CD4-positive, alpha-beta memory T cell (primary cell): ENCODE measurements at regions of chr19 and their contacts with region 1.

Region 1: GRCh38 chr19:1269065-1269477 is at the start of gene CIRBP:
- DNase-seq: peak; percentile 99 to 100 (median 99)
- H3K4me3 ChIP-seq: peak within 1 kb of the TSS; percentile 90 to 100
- H3K4me3 Mint-ChIP-seq: peak within 1 kb of the TSS; percentile 89 to 93 (median 91)
- H3K27ac ChIP-seq: peak within 1 kb of the TSS; percentile 77
- H3K27ac Mint-ChIP-seq: peak within 1 kb of the TSS; percentile 91 to 98 (median 96)
- H3K4me1 ChIP-seq: peaks cover 71% of the 10 kb centered on the region
- H3K4me1 Mint-ChIP-seq: peaks cover 35 to 77% (median 58%) of the 10 kb centered on the region in 4 donors
- H3K27me3 ChIP-seq: no peaks in the 10 kb centered on the region
- H3K27me3 Mint-ChIP-seq: no peaks in the 10 kb centered on the region
- total RNA-seq, gene CIRBP: 574 to 638 TPM

Region 2: DNA sequence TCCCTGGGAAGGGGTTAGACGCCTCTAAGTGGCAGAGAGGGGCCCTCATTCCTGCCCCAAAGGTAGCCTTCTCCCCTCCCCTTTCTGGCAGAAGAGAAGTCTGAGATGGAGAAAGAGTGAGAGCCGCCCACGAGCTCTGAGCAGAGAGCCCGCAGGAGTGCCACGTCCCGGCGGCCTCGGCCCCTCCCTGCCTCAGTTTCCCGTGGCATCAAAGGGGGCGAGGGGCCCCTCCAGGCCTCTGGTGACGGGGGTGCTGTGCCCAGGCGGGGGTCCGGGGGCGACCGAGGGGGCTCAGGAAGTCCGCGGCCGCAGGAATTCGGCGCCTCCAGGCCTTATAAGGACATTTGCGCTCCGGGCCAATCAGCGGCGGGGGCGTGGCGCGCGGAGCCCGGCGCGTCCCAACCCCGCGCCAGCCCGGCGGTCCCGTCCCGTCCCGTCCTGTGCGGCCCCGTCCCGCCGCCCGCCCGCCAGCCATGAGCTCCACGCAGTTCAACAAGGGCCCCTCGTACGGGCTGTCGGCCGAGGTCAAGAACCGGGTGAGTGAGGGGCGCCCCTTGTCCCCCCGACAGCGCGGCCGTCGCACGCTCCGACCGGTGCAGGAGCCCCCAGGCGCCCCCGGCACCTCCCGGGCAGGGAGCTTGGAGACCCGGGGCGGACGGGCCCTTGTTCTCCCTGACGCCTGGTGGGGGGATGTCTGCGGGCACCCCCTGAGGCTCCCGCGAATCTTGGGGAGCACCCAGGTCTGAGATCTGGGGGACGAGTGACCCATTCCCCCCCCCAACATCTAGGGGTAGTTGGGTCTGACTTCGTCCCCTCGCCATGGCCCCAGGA is 242.7 kb before region 1 on chr19 and contains the start of gene CNN2:
- CTCF ChIA-PET with region 1: interaction called, 3 read pairs
- POLR2A ChIA-PET with region 1: interaction called, 32 read pairs
- intact Hi-C with region 1: no loop called
- DNase-seq: peak in 4 of 5 donors; percentile 46 to 68 (median 60)
- H3K4me3 ChIP-seq: peak within 1 kb of the TSS; percentile 91 to 97
- H3K4me3 Mint-ChIP-seq: peak within 1 kb of the TSS; percentile 97 to 99 (median 98)
- H3K27ac ChIP-seq: peak within 1 kb of the TSS; percentile 83
- H3K27ac Mint-ChIP-seq: peak within 1 kb of the TSS; percentile 93 to 98 (median 95)
- H3K4me1 ChIP-seq: peaks cover 38% of the 10 kb centered on the region
- H3K4me1 Mint-ChIP-seq: peaks cover 11 to 38% (median 23%) of the 10 kb centered on the region in 4 donors
- H3K27me3 ChIP-seq: no peaks in the 10 kb centered on the region
- H3K27me3 Mint-ChIP-seq: peaks cover 0 to 2% of the 10 kb centered on the region in 2 donors
- total RNA-seq, gene CNN2: 263 to 266 TPM

Region 3: DNA sequence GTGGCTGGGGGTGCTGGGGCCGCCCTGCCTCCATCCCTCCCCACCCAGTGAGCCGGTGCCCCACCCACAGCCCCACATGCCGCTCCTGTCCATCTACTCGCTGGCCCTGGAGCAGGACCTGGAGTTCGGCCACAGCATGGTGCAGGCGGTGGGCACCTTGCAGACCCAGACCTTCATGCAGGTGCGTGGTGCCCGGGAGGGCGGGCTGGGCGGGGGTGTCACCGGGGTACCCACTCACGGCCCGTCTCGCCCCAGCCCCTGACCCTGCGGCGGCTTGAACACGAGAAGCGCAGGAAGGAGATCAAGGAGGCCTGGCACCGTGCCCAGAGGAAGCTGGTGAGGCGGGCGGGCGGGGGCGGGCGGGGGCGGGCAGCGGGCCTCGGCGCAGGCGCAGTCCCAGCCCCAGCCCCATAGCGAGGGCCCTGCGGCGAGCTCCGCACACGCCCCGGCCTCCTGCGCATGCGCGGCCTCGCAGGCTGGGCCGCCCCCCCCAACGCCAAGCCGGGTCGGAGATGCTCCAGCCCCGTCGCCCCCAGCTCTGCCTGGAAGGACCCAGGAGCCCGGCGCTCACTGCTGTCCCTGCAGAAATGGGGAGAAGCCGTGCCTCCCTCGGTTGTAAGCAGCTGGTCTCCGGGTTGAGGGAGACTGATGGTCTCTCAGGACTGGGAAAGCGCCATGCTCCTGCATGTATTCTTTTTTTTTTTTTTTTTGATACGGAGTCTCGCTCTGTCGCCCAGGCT is 194.4 kb before region 1 on chr19:
- CTCF ChIA-PET with region 1: interaction called, 3 read pairs
- POLR2A ChIA-PET with region 1: interaction called, 25 read pairs
- intact Hi-C with region 1: no loop called
- DNase-seq: peak; percentile 91 to 94 (median 93)
- H3K4me3 ChIP-seq: peak overlapping the region in 1 of 2 donors; percentile 47
- H3K4me3 Mint-ChIP-seq: peak overlapping the region in 7 of 8 donors; percentile 66 to 93 (median 82)
- H3K27ac ChIP-seq: peak overlapping the region; percentile 84
- H3K27ac Mint-ChIP-seq: peak overlapping the region; percentile 94 to 99 (median 97)
- H3K4me1 ChIP-seq: peaks cover 85% of the 10 kb centered on the region
- H3K4me1 Mint-ChIP-seq: peaks cover 27 to 68% (median 43%) of the 10 kb centered on the region in 4 donors
- H3K27me3 ChIP-seq: no peaks in the 10 kb centered on the region
- H3K27me3 Mint-ChIP-seq: no peaks in the 10 kb centered on the region

Region 4: DNA sequence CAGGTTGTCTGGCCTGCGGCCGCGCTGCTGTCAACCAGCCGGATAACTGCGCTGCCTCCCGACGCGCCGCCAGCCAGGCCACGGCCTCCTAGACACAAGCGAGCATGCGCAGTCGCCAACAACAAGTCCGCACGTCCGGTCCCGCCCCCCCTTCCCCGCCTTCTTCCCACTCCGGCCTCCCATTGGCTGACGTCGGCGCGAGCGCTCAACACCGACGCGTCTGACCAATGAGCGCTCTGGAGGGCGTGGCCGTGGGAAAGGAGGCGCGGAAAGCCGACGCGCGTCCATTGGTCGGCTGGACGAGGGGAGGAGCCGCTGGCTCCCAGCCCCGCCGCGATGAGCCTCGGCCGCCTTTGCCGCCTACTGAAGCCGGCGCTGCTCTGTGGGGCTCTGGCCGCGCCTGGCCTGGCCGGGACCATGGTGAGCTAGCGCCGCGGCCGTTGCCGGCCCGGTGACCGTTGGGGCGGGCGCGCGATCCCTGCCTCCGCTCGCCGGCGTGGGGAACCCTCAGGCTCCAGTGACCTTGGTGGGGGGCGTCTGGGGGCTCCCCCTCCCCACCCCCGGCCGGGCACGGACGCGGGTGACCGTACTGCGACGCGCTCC is 165.3 kb before region 1 on chr19 and contains the start of gene GPX4:
- CTCF ChIA-PET with region 1: no interaction called
- POLR2A ChIA-PET with region 1: interaction called, 12 read pairs
- intact Hi-C with region 1: no loop called
- DNase-seq: peak; percentile 94 to 98 (median 97)
- H3K4me3 ChIP-seq: peak within 1 kb of the TSS; percentile 47 to 76
- H3K4me3 Mint-ChIP-seq: peak within 1 kb of the TSS; percentile 73 to 86 (median 77)
- H3K27ac ChIP-seq: peak within 1 kb of the TSS; percentile 96
- H3K27ac Mint-ChIP-seq: peak within 1 kb of the TSS; percentile 92 to 97 (median 96)
- H3K4me1 ChIP-seq: peaks cover 43% of the 10 kb centered on the region
- H3K4me1 Mint-ChIP-seq: peaks cover 14 to 51% (median 33%) of the 10 kb centered on the region in 4 donors
- H3K27me3 ChIP-seq: no peaks in the 10 kb centered on the region
- H3K27me3 Mint-ChIP-seq: no peaks in the 10 kb centered on the region
- total RNA-seq, gene GPX4: 210 to 220 TPM

Region 5: GRCh38 chr19:1241417-1242095 is 27.5 kb before region 1 on chr19 and contains the start of gene ATP5F1D:
- CTCF ChIA-PET with region 1: interaction called, 364 read pairs
- POLR2A ChIA-PET with region 1: interaction called, 650 read pairs
- intact Hi-C with region 1: loop called (anchors 1 kb)
- DNase-seq: peak; percentile 84 to 88 (median 86)
- H3K4me3 ChIP-seq: peak within 1 kb of the TSS; percentile 29 to 59
- H3K4me3 Mint-ChIP-seq: peak within 1 kb of the TSS; percentile 89 to 95 (median 92)
- H3K27ac ChIP-seq: peak within 1 kb of the TSS; percentile 72
- H3K27ac Mint-ChIP-seq: peak within 1 kb of the TSS; percentile 94 to 99 (median 98)
- H3K4me1 ChIP-seq: peaks cover 59% of the 10 kb centered on the region
- H3K4me1 Mint-ChIP-seq: peaks cover 12 to 52% (median 33%) of the 10 kb centered on the region in 4 donors
- H3K27me3 ChIP-seq: no peaks in the 10 kb centered on the region
- H3K27me3 Mint-ChIP-seq: peaks cover 6 to 10% of the 10 kb centered on the region in 2 donors
- total RNA-seq, gene ATP5F1D: 105 to 108 TPM

Region 6: GRCh38 chr19:1406774-1407499 is 137.9 kb after region 1 on chr19:
- CTCF ChIA-PET with region 1: no interaction called
- POLR2A ChIA-PET with region 1: interaction called, 18 read pairs
- intact Hi-C with region 1: no loop called
- DNase-seq: peak; percentile 98 to 100 (median 100)
- H3K4me3 ChIP-seq: peak overlapping the region; percentile 33 to 57
- H3K4me3 Mint-ChIP-seq: peak overlapping the region; percentile 73 to 87 (median 82)
- H3K27ac ChIP-seq: peak overlapping the region; percentile 88
- H3K27ac Mint-ChIP-seq: peak overlapping the region; percentile 67 to 86 (median 84)
- H3K4me1 ChIP-seq: peaks cover 43% of the 10 kb centered on the region
- H3K4me1 Mint-ChIP-seq: peaks cover 20 to 48% (median 37%) of the 10 kb centered on the region in 4 donors
- H3K27me3 ChIP-seq: no peaks in the 10 kb centered on the region
- H3K27me3 Mint-ChIP-seq: no peaks in the 10 kb centered on the region